Lower leg skin (tissue), 4 donors: ENCODE measurements at regions of chr11 and their contacts with region 1.

Region 1: GRCh38 chr11:79294845-79295731 is 145.7 kb downstream of the TENM4 start:
- DNase-seq: no peak
- H3K4me3 ChIP-seq: no peak overlapping the region
- CTCF ChIP-seq: no peak
- POLR2A ChIP-seq: no peak

Region 2: GRCh38 chr11:78212586-78213371 is 1082.3 kb before region 1 on chr11:
- intact Hi-C with region 1: loop called (anchors 5 kb)
- DNase-seq: peak in 1 of 2 donors; percentile 78
- H3K4me3 ChIP-seq: no peak overlapping the region
- CTCF ChIP-seq: no peak
- POLR2A ChIP-seq: no peak

Region 3: DNA sequence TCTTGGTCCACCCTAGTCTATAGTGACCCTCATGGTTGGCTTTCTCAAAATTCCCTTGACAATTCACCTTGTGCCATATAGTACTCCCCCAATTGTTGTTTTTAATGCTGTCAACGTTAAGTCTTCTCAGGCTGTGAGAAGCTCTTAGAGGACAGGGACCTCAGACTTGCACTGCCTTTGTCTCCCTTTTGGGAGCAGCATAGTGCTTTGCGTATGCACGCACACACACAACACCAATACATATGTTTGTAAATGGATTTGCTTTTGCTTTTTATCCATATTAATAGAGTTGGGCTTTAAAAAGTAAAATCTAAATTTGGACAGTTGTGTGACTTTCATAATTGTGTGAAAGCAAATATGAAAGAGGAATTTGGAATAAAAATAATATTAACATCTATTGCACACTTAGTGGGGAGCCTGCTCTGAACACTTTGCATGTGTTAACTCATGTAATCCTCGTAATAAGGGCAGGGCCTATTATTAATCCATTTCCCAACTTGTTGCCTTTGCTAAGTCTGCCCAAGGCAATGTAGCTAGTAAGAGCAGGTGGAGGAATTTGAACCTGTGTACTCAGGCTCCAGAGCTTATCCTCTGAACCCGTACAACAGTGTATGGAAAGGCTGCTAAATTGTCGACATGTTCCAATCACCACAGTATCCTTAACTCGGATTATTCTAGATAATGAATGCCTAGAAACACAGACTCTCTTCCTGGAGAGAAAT is 462.7 kb before region 1 on chr11:
- intact Hi-C with region 1: no loop called
- DNase-seq: no peak
- H3K4me3 ChIP-seq: no peak overlapping the region
- CTCF ChIP-seq: no peak
- POLR2A ChIP-seq: no peak

Region 4: GRCh38 chr11:79390477-79390876 is 95.4 kb after region 1 on chr11:
- intact Hi-C with region 1: no loop called
- DNase-seq: no peak
- H3K4me3 ChIP-seq: no peak overlapping the region
- CTCF ChIP-seq: no peak
- POLR2A ChIP-seq: no peak